Lower leg skin (tissue), 4 donors: ENCODE measurements at regions of chr19 and their contacts with region 1.

Region 1: GRCh38 chr19:46990991-46991676 is 28.5 kb upstream of the NPAS1 start:
- DNase-seq: peak; percentile 80 to 95
- H3K4me3 ChIP-seq: no peak overlapping the region
- CTCF ChIP-seq: peak in 1 of 3 donors; percentile 83
- POLR2A ChIP-seq: no peak

Region 2: DNA sequence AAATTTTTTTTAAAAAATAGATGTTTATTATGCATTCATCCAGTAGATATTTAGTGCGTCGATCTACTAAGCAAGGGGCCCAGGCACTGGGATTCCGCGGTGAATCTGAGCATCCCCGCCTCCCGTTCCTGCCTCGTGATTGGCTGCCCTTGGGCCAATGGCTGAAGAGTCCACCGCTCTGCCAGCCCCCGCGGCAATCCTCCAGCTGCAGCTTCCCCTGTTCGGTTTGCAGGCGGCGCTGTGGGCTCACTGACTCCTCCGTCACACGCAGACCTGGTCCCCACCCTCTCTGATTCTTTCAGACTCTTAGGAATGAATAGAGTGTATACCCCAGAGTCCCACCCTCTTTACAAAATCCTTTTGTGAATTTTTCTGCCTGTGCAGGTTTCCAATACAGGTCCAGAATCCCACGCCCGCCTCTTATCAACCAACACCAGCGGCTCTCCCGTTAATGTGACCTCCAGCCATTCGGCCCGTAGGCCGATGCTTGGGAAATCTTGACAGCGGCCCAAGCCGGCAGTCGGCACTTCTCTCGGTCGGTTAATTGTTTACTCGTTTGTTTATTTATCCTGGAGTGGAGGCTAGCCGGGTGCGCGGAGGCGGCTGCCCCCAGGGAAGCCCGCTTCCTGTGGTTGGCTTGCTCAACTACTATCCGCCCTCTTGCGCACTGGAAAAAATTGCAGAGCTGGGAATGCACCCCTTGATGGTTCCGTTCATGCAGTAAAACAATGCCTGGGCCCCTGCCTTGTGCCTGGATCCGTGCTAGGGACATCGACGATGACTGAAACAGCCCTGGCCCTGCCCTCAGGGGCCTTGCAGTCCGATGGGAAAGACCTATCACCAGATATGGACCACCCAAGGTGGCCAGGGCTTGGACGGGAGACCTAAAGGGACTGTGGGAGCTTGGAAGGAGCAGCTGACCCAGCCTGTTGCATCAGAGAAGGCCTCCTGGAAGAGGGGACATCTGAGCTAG is 134.8 kb before region 1 on chr19:
- intact Hi-C with region 1: loop called (anchors 5 kb)
- DNase-seq: peak; percentile 97 to 99
- H3K4me3 ChIP-seq: no peak overlapping the region
- CTCF ChIP-seq: peak in 1 of 3 donors; percentile 30
- POLR2A ChIP-seq: no peak